ENCODE measurements at regions of chr3 and their contacts with region 1.

Region 1: GRCh38 chr3:30768703-30769685 is 125.5 kb downstream of the GADL1 start:
- DNase-seq: peak in 1 of 2 donors; percentile 82
- H3K4me3 ChIP-seq: no peak overlapping the region
- H3K27ac ChIP-seq: no peak overlapping the region
- H3K4me1 ChIP-seq: no peaks in the 10 kb centered on the region
- H3K27me3 ChIP-seq: no peaks in the 10 kb centered on the region
- CTCF ChIP-seq: peak; percentile 62 to 81 (median 77)

Region 2: GRCh38 chr3:31132132-31132769 is 363.3 kb after region 1 on chr3:
- intact Hi-C with region 1: loop called (anchors 2 kb)
- DNase-seq: no peak
- H3K4me3 ChIP-seq: no peak overlapping the region
- H3K27ac ChIP-seq: no peak overlapping the region
- H3K4me1 ChIP-seq: no peaks in the 10 kb centered on the region
- H3K27me3 ChIP-seq: no peaks in the 10 kb centered on the region
- CTCF ChIP-seq: peak; percentile 12 to 43 (median 33)

Region 3: DNA sequence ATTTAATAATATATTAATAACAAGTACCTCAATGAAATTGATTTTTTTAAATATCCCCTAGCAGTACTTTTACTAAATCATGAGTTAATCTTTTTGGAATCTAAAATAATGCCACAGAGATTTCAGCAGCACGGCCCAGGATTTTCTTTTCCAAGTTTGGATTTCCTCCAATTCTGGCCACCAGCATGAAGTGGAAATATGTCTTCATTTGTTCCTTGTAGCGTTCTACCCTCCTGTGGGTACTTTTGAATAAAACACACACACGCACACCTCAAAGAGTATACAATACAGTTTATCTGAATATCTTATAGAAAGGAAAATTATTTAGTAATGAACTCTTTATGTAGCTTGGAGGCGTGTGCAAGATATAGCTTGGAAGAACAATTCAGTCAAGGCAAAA is 638.7 kb after region 1 on chr3:
- intact Hi-C with region 1: loop called (anchors 5 kb)
- DNase-seq: no peak
- H3K4me3 ChIP-seq: no peak overlapping the region
- H3K27ac ChIP-seq: no peak overlapping the region
- H3K4me1 ChIP-seq: peaks cover 3 to 5% of the 10 kb centered on the region in 2 donors
- H3K27me3 ChIP-seq: no peaks in the 10 kb centered on the region
- CTCF ChIP-seq: peak in 2 of 3 experiments; percentile 10 to 30

Region 4: GRCh38 chr3:31768479-31769123 is 999.6 kb after region 1 on chr3:
- intact Hi-C with region 1: loop called (anchors 5 kb)
- DNase-seq: peak in 1 of 2 donors; percentile 69
- H3K4me3 ChIP-seq: no peak overlapping the region
- H3K27ac ChIP-seq: no peak overlapping the region
- H3K4me1 ChIP-seq: peaks cover 0 to 2% of the 10 kb centered on the region in 2 donors
- H3K27me3 ChIP-seq: no peaks in the 10 kb centered on the region
- CTCF ChIP-seq: peak; percentile 48 to 73 (median 53)